AG04449 (cell line): ENCODE measurements at regions of chr9 and their contacts with region 1.

Region 1: DNA sequence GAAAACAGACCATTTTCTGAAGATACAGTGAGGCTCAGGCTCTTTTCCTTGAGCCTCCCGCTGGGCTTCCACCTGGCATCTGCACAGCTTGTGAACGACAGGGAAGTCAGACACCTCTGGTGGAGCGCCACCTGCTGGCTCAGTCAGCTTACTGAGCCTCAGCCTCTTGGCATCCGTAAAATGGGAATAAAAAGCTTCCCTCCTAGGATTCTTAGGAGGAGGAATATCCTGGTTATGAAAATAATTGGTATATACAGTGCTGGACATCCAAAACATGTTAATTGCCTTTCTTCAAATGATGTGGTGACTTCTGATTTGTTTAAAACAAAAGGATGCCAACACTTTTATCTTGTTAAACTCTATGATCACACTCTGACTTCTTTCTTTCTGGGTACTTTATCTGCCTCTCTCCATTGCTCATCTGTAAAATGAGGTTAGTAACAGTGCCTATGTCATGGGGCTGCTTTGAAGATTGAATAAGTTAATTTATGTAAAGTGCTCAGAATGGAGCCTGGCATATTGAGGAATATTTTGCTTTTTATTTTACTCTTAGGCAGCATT is 67.5 kb downstream of the MAMDC2 start:
- DNase-seq: no peak
- H3K4me3 ChIP-seq: no peak overlapping the region
- CTCF ChIP-seq: peak; percentile 79

Region 2: GRCh38 chr9:69637817-69638200 is 473.3 kb before region 1 on chr9:
- CTCF ChIA-PET with region 1: no interaction called
- POLR2A ChIA-PET with region 1: no interaction called
- DNase-seq: no peak
- H3K4me3 ChIP-seq: no peak overlapping the region
- CTCF ChIP-seq: no peak

Region 3: GRCh38 chr9:69898714-69899209 is 212.4 kb before region 1 on chr9:
- CTCF ChIA-PET with region 1: interaction called, 20 read pairs
- POLR2A ChIA-PET with region 1: no interaction called
- DNase-seq: no peak
- H3K4me3 ChIP-seq: no peak overlapping the region
- CTCF ChIP-seq: no peak

Region 4: DNA sequence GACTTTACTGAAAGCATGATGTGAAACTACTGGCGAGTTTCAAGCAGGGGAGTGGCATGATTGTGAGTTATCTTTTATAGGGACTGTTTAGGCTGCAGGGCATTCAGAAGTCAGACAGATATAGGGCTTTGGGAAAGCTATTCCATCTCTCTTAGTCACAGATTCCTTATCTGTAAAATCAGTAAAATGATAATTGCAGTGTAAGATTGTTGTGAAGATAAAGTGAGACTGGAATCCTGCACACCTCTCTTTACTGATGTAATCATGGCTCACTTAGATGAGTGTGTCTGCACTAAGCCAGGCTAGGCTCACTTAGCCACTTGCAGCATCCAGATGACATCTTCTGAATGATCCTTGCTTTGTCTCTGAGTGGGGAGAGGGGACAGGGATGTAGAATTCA is 149.3 kb before region 1 on chr9:
- CTCF ChIA-PET with region 1: interaction called, 385 read pairs
- POLR2A ChIA-PET with region 1: no interaction called
- DNase-seq: no peak
- H3K4me3 ChIP-seq: no peak overlapping the region
- CTCF ChIP-seq: no peak

Region 5: DNA sequence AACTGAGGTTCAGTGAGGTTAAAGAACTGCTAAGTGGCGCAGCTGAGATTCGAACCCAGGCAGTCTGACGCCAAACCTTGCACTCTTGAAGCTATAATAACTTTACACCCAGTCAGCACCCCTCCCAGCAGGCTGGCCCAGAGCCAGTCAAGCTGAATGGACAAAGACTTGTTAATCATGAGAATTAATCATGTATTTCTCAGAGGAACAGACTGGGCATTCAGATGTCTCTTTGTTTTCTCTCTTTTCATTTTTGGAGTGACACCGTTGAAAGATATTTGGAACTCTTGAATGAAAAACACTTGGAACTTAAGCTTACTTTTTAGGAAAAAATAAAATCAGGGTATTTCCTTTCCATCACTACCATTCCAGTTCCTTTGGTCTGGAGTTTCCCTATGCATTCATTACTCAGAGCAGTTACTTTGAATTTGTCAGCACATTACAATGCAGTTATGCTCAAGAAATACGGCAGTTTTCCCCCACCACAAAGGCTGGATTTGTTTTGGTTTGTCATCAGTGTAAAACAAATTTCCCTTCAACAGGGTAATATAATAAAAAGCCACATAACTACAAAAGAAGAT is 90.0 kb before region 1 on chr9:
- CTCF ChIA-PET with region 1: interaction called, 11 read pairs
- POLR2A ChIA-PET with region 1: no interaction called
- DNase-seq: peak; percentile 75
- H3K4me3 ChIP-seq: no peak overlapping the region
- CTCF ChIP-seq: no peak

Region 6: DNA sequence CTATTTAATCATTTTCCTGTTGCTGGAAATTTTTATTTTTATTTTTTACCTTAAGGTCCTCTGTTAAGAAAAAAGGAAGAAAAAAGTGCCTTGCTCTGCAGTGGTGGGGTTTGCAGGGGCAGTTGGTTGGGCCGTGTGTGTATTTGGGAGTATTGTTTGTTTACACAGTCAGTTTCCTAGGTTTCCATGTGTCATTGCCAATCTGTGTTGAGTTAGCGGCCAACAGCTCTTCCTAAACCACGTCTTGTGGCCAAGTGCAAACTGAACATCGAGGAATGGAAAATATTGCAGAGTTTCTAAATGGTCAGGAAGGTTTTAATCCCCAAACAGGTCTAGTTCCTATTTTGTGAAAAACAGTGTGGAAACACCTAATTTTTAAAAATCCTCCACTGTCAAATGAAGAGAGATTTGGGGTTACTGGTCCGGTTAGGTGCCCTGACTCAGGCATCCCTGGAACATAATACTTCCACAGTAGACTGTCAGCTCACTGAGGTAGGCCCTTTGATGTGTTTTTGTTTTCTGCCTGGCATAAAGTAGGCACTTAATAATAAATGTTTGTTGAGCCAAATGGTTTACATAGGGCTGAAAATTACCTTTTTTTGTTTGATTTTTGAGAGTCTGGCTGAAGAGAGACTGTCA is 30.5 kb before region 1 on chr9:
- CTCF ChIA-PET with region 1: interaction called, 79 read pairs
- POLR2A ChIA-PET with region 1: no interaction called
- DNase-seq: no peak
- H3K4me3 ChIP-seq: no peak overlapping the region
- CTCF ChIP-seq: no peak

Region 7: GRCh38 chr9:70160686-70161600 is 49.8 kb after region 1 on chr9:
- CTCF ChIA-PET with region 1: interaction called, 12 read pairs
- POLR2A ChIA-PET with region 1: no interaction called
- DNase-seq: no peak
- H3K4me3 ChIP-seq: no peak overlapping the region
- CTCF ChIP-seq: no peak